ENCODE measurements at regions of chr12 and their contacts with region 1.

Region 1: DNA sequence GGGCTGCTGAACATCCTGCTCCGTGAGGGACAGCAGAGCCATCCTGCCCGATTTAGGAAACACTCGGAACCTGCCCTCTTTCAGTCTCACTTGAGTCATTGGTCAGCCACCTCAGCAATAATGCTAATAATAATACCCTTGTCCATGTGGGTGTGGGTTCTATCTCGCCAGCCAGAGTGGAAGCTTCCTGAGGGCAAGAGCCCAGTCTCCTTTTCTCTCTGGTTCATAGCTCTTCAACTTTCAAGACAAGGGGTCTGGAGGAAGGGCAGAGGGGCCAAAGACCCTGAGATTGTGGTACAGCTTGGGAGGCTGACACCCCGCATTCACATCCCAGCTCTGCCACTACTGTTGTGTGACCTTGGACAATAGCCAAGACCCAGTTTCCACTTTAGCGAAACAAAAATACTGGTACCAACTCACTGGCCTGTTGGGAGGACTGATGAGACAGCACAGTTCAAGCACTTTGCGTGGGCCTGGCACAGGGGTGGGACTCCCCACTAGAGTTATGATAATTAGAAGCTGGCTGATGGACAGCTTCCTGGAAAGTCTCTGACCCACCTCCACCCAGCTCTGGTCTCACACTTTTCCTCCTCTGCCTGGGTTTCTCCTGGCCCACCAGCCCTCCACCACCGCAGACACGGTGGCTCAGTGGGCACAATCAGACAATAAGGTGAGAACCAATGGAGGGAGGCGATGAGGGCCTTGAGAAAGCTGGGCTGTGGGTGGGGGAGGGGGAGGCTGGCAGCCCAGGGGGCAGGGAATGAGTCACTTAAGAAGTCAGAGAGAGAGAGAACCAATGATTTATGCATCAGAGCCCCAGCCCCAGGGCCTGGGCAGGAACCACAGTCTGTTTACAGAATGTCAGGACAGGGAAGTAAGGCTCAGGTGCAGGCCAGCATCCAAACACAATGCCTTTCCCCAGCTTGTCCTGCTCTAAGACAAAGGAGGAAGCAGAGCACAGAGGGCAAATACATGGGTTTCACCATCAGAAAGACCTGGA is 9.6 kb downstream of the FAIM2 start:
- DNase-seq: no peak

Region 2: DNA sequence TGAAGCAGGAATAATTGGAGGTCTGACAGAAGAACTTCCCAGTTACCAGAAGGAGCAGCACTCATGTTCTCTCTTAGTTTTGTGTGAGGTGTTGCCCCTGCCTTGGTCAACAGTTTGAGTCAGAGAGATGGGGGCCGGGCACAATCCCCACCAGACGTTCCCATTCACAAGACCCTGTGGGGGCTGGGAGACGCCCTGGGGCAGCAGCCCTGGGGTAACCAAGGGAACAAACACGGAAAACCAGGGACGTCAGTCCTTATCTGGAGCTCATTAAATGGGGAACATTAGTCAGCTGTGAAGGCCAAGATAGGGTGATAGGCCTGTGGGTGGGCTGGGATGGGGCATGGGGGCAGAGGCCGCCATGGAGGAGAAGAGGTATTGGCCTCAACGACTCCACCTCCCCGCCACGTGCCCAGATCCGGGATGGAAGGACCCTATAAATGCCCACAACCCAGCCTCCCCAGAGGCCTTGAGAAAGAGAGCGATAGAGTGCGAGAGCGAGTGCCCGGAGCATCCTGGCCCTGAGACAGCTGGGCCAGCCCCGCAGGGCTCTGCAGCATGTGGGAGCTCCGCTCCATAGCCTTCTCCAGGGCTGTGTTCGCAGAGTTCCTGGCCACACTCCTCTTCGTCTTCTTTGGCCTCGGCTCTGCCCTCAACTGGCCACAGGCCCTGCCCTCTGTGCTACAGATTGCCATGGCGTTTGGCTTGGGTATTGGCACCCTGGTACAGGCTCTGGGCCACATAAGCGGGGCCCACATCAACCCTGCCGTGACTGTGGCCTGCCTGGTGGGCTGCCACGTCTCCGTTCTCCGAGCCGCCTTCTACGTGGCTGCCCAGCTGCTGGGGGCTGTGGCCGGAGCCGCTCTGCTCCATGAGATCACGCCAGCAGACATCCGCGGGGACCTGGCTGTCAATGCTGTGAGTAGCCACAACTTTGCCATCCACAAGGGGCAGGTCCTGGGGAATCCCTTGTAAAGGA is 56.5 kb after region 1 on chr12 and contains the start of gene AQP2:
- intact Hi-C with region 1: loop called in 1 of 2 experiments (anchors 2 kb)
- DNase-seq: peak; percentile 77
- total RNA-seq, gene AQP2: 0.33 to 0.42 TPM